Endothelial cell of umbilical vein (primary cell): ENCODE measurements at regions of chr3 and their contacts with region 1.

Region 1: DNA sequence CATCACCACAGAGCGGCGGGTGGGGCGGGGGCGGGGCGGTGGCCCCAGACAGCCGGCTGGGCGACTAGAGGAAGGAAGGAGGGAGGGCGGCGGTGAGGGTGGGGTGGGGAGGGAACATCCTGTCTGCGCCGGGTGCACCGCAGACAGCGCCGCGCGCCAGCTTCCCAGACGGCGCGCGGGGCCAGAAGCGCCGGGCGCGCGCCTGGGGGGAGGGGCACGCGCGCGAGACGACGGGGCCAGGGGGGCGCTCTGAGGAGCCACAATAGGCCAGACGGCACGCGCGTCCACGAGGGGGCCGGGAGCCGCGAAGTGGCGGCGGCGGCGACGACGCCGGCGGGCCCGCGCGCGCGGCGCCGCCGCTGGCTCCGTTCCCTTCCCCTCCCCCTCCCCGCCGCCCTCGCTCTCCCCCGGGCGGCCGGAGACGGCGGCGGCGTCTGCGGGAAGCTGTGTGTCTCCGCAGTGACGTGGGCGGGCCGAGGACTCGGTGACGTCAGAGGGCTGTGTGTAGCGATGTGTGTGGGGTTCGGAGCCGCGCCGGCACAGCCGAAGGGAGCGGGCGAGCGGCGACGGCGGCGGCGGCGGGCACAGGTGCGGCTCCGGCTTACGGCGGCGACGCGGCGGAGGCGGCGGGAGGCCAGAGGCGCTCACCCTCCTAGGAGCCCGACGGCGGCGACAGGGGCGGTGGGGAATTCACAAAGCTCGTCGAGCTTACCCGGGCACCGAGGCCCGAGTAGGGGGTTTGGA is at the start of gene SKIL:
- DNase-seq: peak; percentile 93
- H3K4me3 ChIP-seq: peak within 1 kb of the TSS; percentile 67 to 94 (median 86)
- H3K27ac ChIP-seq: peak within 1 kb of the TSS; percentile 100
- H3K4me1 ChIP-seq: peaks cover 47% of the 10 kb centered on the region
- H3K27me3 ChIP-seq: no peaks in the 10 kb centered on the region
- CTCF ChIP-seq: peak in 1 of 2 donors; percentile 23
- POLR2A ChIP-seq: peak; percentile 74
- total RNA-seq, gene SKIL: 135 and 149 TPM in 2 replicates

Region 2: GRCh38 chr3:169662132-169662842 is 695.1 kb before region 1 on chr3:
- CTCF ChIA-PET with region 1: no interaction called
- POLR2A ChIA-PET with region 1: no interaction called
- dilution Hi-C with region 1: no loop called
- intact Hi-C with region 1: loop called (anchors 5 kb)
- DNase-seq: peak; percentile 84
- H3K4me3 ChIP-seq: peak overlapping the region; percentile 23 to 77 (median 64)
- H3K27ac ChIP-seq: peak overlapping the region; percentile 81
- H3K4me1 ChIP-seq: peaks cover 66% of the 10 kb centered on the region
- H3K27me3 ChIP-seq: no peaks in the 10 kb centered on the region
- CTCF ChIP-seq: peak; percentile 46 to 77
- POLR2A ChIP-seq: peak; percentile 55

Region 3: GRCh38 chr3:170180908-170181879 is 176.2 kb before region 1 on chr3 and contains the start of gene PHC3:
- CTCF ChIA-PET with region 1: no interaction called
- POLR2A ChIA-PET with region 1: no interaction called
- dilution Hi-C with region 1: no loop called
- intact Hi-C with region 1: loop called (anchors 1 kb)
- DNase-seq: peak; percentile 95
- H3K4me3 ChIP-seq: peak within 1 kb of the TSS; percentile 50 to 88 (median 77)
- H3K27ac ChIP-seq: peak within 1 kb of the TSS; percentile 44
- H3K4me1 ChIP-seq: peaks cover 11% of the 10 kb centered on the region
- H3K27me3 ChIP-seq: no peaks in the 10 kb centered on the region
- CTCF ChIP-seq: no peak
- POLR2A ChIP-seq: peak; percentile 90
- total RNA-seq, gene PHC3: 34.4 and 45.8 TPM in 2 replicates

Region 4: GRCh38 chr3:170270282-170270881 is 87.0 kb before region 1 on chr3:
- CTCF ChIA-PET with region 1: no interaction called
- POLR2A ChIA-PET with region 1: no interaction called
- dilution Hi-C with region 1: no loop called
- intact Hi-C with region 1: no loop called
- DNase-seq: no peak
- H3K4me3 ChIP-seq: no peak overlapping the region
- H3K27ac ChIP-seq: no peak overlapping the region
- H3K4me1 ChIP-seq: no peaks in the 10 kb centered on the region
- H3K27me3 ChIP-seq: no peaks in the 10 kb centered on the region
- CTCF ChIP-seq: no peak
- POLR2A ChIP-seq: no peak

Region 5: DNA sequence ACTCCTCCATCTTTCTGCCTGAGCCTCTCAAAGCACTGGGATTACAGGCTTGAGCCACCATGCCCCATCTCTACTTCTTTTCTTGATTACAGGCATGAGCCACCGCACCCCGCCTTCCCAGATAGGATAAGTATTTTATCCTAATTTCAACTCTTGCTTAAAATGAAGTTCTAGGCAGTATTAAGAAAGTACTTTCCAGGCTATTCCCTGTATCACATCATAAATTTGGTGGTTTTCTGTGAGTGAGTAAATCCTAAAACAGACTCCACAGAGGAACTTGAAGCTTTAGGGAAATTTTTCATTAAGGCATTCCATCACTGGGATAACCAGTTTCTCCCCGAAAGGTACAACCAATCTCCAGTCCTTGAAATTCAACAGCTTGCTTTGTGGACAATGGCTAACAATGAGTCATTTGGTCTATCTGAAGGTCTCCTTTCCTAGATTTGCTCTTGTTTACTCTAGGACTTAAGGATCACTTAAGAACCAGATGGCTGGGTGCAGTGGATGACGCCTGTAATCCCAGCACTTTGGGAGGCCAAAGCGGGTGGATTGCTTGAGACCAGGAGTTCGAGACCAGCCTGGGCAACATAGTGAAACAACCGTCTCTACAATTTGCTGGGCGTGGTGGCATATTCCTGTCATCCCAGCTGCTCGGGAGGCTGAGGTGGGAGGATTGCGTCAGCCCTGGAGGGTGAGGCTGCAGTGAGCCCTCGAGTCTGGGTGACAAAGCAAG is 49.5 kb before region 1 on chr3:
- CTCF ChIA-PET with region 1: interaction called, 14 read pairs
- POLR2A ChIA-PET with region 1: interaction called, 3 read pairs
- dilution Hi-C with region 1: no loop called
- intact Hi-C with region 1: loop called (anchors 1 kb)
- DNase-seq: no peak
- H3K4me3 ChIP-seq: no peak overlapping the region
- H3K27ac ChIP-seq: no peak overlapping the region
- H3K4me1 ChIP-seq: peaks cover 7% of the 10 kb centered on the region
- H3K27me3 ChIP-seq: no peaks in the 10 kb centered on the region
- CTCF ChIP-seq: no peak
- POLR2A ChIP-seq: no peak

Region 6: DNA sequence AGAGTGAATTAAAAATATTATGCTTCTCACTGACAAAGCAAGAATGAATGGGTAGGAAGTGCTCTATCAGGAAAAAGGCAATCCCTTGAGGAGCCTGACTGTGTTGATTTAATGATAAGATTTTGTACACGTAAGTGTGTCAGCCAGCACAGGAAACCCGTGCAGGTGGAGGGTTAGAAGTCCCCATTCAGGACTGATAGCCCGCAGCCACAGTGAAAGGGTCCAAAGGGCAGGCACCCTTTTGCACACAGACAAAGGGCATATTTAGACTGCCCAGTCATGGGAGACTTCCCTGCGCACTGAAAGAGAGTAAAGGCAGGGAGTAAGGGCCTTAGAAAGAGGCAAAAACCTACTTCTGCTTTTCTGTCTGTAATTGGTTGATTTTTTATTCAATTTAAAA is 26.2 kb before region 1 on chr3:
- CTCF ChIA-PET with region 1: interaction called, 8 read pairs
- POLR2A ChIA-PET with region 1: interaction called, 3 read pairs
- dilution Hi-C with region 1: no loop called
- intact Hi-C with region 1: loop called (anchors 1 kb)
- DNase-seq: peak; percentile 93
- H3K4me3 ChIP-seq: no peak overlapping the region
- H3K27ac ChIP-seq: peak overlapping the region; percentile 84
- H3K4me1 ChIP-seq: peaks cover 13% of the 10 kb centered on the region
- H3K27me3 ChIP-seq: no peaks in the 10 kb centered on the region
- CTCF ChIP-seq: no peak
- POLR2A ChIP-seq: peak; percentile 13

Region 7: GRCh38 chr3:170368921-170369320 is 11.6 kb after region 1 on chr3:
- CTCF ChIA-PET with region 1: interaction called, 16 read pairs
- POLR2A ChIA-PET with region 1: interaction called, 4 read pairs
- dilution Hi-C with region 1: no loop called
- intact Hi-C with region 1: no loop called
- DNase-seq: no peak
- H3K4me3 ChIP-seq: no peak overlapping the region
- H3K27ac ChIP-seq: no peak overlapping the region
- H3K4me1 ChIP-seq: peaks cover 44% of the 10 kb centered on the region
- H3K27me3 ChIP-seq: no peaks in the 10 kb centered on the region
- CTCF ChIP-seq: peak; percentile 13 to 16
- POLR2A ChIP-seq: no peak

Region 8: DNA sequence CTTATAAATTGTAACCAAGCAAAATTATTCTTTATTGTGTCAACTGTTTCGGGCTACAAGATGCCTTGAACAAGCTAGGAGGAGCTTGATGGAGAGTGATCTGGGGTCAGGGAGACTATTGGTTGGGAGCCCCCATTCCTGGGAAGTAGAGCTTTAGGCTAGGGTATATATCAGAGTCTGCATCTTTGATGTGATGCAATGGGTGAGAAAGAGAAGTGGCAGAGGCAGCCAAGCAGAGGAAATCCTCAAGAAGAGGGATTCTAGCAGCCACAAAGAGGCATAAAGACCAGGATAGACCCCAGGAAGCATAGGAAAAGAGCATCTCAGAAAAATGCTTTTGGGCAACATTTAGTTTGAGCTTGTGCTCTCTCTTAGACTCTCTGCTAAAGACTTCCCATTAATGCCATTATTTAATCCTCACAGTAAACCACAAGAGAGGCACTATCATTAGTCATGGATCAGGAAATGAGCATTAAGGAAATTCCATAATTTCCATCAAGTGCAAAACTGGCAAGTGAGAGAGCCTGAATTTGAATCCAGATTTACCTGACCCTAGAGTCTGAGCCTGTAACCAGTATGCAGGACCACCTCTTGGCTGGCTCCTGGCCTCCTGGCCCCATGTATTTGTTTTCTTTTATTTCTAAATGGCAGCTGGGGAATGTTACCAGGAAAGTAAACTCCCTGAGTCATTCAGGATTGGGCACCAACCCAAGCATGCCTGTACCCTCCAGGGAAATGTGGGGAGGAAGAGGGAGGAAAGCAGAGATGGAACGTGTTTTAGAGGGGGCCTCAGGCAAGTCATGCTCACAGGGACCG is 393.9 kb after region 1 on chr3:
- CTCF ChIA-PET with region 1: no interaction called
- POLR2A ChIA-PET with region 1: no interaction called
- dilution Hi-C with region 1: no loop called
- intact Hi-C with region 1: loop called (anchors 2 kb)
- DNase-seq: peak; percentile 95
- H3K4me3 ChIP-seq: no peak overlapping the region
- H3K27ac ChIP-seq: peak overlapping the region; percentile 95
- H3K4me1 ChIP-seq: peaks cover 77% of the 10 kb centered on the region
- H3K27me3 ChIP-seq: no peaks in the 10 kb centered on the region
- CTCF ChIP-seq: no peak
- POLR2A ChIP-seq: no peak